Activated naive CD4-positive, alpha-beta T cell treated with anti-CD3 and anti-CD28 coated beads, Interleukin-2, amount 10 ng/mL, durations not matched to agents 7 days and 5 days (primary cell): ENCODE measurements at regions of chr10 and their contacts with region 1.

Region 1: GRCh38 chr10:100998991-100999741 is 442 bp upstream of the LZTS2 start:
- DNase-seq: peak; percentile 82
- H3K4me3 Mint-ChIP-seq: peak overlapping the region; percentile 84
- H3K27ac Mint-ChIP-seq: peak overlapping the region; percentile 89
- H3K4me1 Mint-ChIP-seq: peaks cover 29% of the 10 kb centered on the region
- H3K27me3 Mint-ChIP-seq: peaks cover 8% of the 10 kb centered on the region

Region 2: GRCh38 chr10:100986952-100987750 is 12.0 kb before region 1 on chr10 and contains the starts of genes MRPL43 and TWNK:
- CTCF ChIA-PET with region 1: interaction called, 26 read pairs
- DNase-seq: peak; percentile 92
- H3K4me3 Mint-ChIP-seq: peak within 1 kb of the TSS; percentile 88
- H3K27ac Mint-ChIP-seq: peak within 1 kb of the TSS; percentile 89
- H3K4me1 Mint-ChIP-seq: peaks cover 39% of the 10 kb centered on the region
- H3K27me3 Mint-ChIP-seq: no peaks in the 10 kb centered on the region

Region 3: GRCh38 chr10:101031128-101031795 is 32.1 kb after region 1 on chr10 and contains the starts of genes PDZD7 and SFXN3:
- CTCF ChIA-PET with region 1: interaction called, 13 read pairs
- DNase-seq: peak; percentile 98
- H3K4me3 Mint-ChIP-seq: peak within 1 kb of the TSS; percentile 81
- H3K27ac Mint-ChIP-seq: peak within 1 kb of the TSS; percentile 96
- H3K4me1 Mint-ChIP-seq: peaks cover 25% of the 10 kb centered on the region
- H3K27me3 Mint-ChIP-seq: peaks cover 42% of the 10 kb centered on the region

Region 4: DNA sequence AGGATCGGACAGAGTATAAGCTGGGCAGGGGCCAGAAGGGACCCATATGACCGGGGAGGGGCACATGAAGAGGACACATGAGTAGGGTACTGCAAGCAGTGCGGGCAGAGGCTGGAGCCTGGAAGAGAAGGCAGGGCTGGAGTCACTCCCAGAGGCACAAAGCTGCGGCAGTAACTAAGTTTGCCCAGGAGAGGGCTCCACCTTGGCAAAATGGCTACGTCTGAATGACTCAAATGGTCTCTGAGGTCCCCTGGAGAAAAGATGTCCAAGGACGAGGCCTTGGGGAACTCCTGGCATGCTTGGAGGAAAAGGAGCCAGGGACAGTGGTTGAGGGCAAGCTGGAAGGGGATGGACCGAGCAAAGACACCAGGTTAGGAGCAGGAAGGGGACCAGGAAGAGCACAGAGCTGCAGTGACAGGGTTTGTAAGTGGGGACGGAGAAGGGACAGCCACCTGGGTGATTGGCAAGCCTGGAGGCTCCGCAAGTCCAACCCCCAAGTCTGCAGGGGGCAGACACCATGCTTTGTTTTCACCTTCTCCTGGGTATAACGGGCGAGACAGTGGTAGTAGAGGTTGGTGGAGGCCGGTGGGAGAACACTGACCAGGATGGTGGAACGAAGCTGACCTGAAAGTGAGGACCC is 273.2 kb after region 1 on chr10:
- CTCF ChIA-PET with region 1: no interaction called
- DNase-seq: peak; percentile 72
- H3K4me3 Mint-ChIP-seq: no peak overlapping the region
- H3K27ac Mint-ChIP-seq: no peak overlapping the region
- H3K4me1 Mint-ChIP-seq: peaks cover 2% of the 10 kb centered on the region
- H3K27me3 Mint-ChIP-seq: peaks cover 36% of the 10 kb centered on the region